Panc1 (cell line): ENCODE measurements at regions of chr17 and their contacts with region 1.

Region 1: GRCh38 chr17:57357399-57357807 is 101.1 kb downstream of the MSI2 start:
- DNase-seq: no peak
- ATAC-seq: no peak
- H3K4me3 ChIP-seq: no peak overlapping the region
- H3K27ac ChIP-seq: no peak overlapping the region
- H3K4me1 ChIP-seq: no peaks in the 10 kb centered on the region
- H3K27me3 ChIP-seq: no peaks in the 10 kb centered on the region
- CTCF ChIP-seq: no peak

Region 2: GRCh38 chr17:57379237-57379894 is 22.0 kb after region 1 on chr17:
- CTCF ChIA-PET with region 1: no interaction called
- POLR2A ChIA-PET with region 1: interaction called, 13 read pairs
- in situ Hi-C with region 1: no loop called
- intact Hi-C with region 1: no loop called
- DNase-seq: no peak
- ATAC-seq: no peak
- H3K4me3 ChIP-seq: no peak overlapping the region
- H3K27ac ChIP-seq: no peak overlapping the region
- H3K4me1 ChIP-seq: no peaks in the 10 kb centered on the region
- H3K27me3 ChIP-seq: no peaks in the 10 kb centered on the region
- CTCF ChIP-seq: no peak

Region 3: GRCh38 chr17:57422574-57423164 is 65.3 kb after region 1 on chr17:
- CTCF ChIA-PET with region 1: no interaction called
- POLR2A ChIA-PET with region 1: no interaction called
- in situ Hi-C with region 1: no loop called
- intact Hi-C with region 1: no loop called
- DNase-seq: peak; percentile 45
- ATAC-seq: no peak
- H3K4me3 ChIP-seq: no peak overlapping the region
- H3K27ac ChIP-seq: no peak overlapping the region
- H3K4me1 ChIP-seq: no peaks in the 10 kb centered on the region
- H3K27me3 ChIP-seq: no peaks in the 10 kb centered on the region
- CTCF ChIP-seq: no peak